ENCODE measurements at regions of chr16 and their contacts with region 1.

Region 1: DNA sequence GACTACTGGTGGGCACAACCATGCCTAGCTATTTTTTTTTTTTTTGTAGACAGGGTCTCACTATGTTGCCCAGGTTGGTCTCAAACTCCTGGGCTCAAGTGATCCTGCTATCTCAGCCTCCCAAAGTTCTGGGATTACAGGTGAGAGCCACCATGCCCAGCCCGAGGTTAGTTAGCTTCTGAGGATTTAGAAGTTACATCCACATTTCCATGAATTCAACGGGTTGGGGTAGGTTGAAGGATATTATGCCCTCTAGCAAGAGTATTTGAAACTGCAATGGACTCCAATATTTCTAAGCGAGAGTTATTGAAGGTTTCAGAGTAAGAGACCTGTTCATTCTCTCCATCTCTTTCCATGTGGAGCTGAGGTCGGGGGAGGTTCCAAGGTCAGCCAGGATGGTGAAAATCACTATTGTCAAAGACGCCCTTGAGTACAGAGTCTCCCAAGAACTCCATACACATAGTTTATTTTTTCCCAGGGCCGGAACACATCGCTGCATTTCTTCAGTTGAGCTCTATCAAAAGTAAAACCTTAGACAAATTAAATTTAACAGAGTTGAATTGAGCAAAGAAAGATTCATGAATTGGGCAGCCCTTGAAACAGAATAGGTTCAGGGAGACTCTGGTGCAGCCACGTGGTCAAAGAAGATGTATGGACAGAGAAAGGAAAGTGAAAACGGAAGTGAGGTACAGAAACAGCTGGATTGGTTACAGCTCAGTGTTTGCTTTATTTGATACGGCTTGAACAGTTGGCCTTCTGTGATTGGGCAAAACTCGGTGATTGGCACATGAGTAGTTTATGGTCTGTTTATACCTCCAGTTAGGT is 19.0 kb upstream of the ITPRIPL2 start:
- DNase-seq: peak in 3 of 4 experiments; percentile 21 to 28 (median 21)
- ATAC-seq: peak; percentile 77
- H3K4me3 ChIP-seq: no peak overlapping the region
- H3K27ac ChIP-seq: no peak overlapping the region
- H3K4me1 ChIP-seq: peaks cover 0 to 10% of the 10 kb centered on the region in 2 experiments; a peak in 1 of 5 replicates
- H3K27me3 ChIP-seq: no peaks in the 10 kb centered on the region
- CTCF ChIP-seq: peak; percentile 27 to 39 (median 31); a peak in 3 of 6 replicates
- EP300 ChIP-seq: no peak
- POLR2A ChIP-seq: no peak
- RAD21 ChIP-seq: peak in 1 of 2 experiments; percentile 13; a peak in 2 of 4 replicates

Region 2: DNA sequence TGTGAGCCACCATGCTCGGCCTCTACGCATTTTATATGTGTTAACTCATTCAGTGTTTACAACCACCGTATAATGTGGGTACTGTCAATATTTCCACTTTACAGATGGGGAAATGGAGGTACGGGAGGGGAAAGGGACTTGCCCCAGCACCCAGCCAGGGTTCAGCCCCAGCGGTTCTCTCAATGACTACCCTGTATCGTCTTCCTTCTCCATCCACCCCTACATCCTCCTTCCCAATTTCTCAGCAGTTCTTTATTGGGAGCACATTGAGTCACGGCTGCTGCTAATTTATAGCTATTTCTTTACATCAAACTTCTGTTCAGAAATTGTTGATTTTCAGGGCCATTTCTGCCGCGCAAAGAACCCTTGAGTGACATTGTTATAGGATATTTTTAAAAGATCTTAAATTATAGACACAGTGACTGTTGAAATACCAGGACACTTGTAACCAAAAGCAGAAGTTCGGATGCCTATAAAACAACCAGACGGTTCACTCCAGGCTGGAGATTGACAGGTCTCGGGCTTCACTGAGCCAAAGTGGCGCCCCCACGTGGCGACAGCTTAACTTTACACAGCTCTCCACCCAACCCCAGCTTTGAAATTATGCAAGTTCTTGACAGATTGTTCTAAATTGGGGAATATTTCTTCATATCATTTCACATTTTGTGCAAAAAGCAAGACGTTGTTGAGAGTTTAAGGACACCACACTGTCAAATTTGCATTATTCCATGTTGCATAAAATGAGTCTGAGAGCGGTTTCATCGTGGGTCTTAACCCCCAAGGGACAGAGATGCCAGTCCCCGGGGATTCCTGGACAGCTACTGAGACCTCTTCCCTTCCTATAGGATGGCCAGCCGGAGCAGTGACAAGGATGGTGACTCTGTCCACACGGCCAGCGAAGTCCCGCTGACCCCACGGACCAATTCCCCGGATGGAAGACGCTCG is 85.1 kb after region 1 on chr16:
- CTCF ChIA-PET with region 1: interaction called, 4 read pairs
- POLR2A ChIA-PET with region 1: no interaction called
- in situ Hi-C with region 1: loop called (anchors 5 kb)
- intact Hi-C with region 1: no loop called
- DNase-seq: peak; percentile 73 to 81 (median 78)
- ATAC-seq: peak; percentile 96
- H3K4me3 ChIP-seq: no peak overlapping the region
- H3K27ac ChIP-seq: no peak overlapping the region
- H3K4me1 ChIP-seq: no peaks in the 10 kb centered on the region
- H3K27me3 ChIP-seq: peaks cover 35 to 61% of the 10 kb centered on the region in 2 experiments
- CTCF ChIP-seq: peak; percentile 77 to 88 (median 86)
- EP300 ChIP-seq: no peak
- POLR2A ChIP-seq: no peak
- RAD21 ChIP-seq: peak; percentile 62 to 77